A549 (cell line): ENCODE measurements at regions of chr12 and their contacts with region 1.

Region 1: DNA sequence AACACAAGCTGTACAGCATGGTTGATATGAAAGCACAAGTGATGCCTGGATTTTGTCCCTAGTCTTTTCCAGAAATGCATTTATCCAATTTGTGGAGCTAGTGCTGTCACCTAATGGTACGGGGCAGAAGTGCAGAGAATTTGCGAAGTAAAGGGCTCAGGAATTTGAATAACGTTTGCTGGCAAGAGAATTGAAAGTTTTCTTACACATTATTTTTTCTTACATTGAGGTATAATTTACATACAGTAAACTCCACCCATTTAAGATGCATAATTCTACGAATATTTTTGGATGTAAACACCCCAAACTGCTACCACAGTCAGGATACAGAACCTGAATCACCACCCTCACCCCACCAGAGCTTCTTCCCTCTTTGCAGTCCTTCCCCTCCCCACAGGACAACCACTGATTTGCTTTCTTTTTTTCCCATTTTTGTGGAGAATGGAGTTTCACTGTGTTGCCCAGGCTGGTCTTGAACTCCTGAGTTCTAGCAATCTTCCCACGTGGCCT is 3.5 kb downstream of the AICDA start:
- DNase-seq: peak; percentile 47 to 60
- ATAC-seq: peak; percentile 77 to 86; a peak in 5 of 6 replicates
- H3K4me3 ChIP-seq: no peak overlapping the region
- H3K27ac ChIP-seq: peak overlapping the region; percentile 52 to 67; a peak in 5 of 6 replicates
- H3K4me1 ChIP-seq: peaks cover 6% of the 10 kb centered on the region; the same call in 1 of the 3 replicates
- CTCF ChIP-seq: peak; percentile 28; the same call in 2 of the 3 replicates
- EP300 ChIP-seq: no peak
- POLR2A ChIP-seq: no peak
- RAD21 ChIP-seq: peak; percentile 63 to 77

Region 2: DNA sequence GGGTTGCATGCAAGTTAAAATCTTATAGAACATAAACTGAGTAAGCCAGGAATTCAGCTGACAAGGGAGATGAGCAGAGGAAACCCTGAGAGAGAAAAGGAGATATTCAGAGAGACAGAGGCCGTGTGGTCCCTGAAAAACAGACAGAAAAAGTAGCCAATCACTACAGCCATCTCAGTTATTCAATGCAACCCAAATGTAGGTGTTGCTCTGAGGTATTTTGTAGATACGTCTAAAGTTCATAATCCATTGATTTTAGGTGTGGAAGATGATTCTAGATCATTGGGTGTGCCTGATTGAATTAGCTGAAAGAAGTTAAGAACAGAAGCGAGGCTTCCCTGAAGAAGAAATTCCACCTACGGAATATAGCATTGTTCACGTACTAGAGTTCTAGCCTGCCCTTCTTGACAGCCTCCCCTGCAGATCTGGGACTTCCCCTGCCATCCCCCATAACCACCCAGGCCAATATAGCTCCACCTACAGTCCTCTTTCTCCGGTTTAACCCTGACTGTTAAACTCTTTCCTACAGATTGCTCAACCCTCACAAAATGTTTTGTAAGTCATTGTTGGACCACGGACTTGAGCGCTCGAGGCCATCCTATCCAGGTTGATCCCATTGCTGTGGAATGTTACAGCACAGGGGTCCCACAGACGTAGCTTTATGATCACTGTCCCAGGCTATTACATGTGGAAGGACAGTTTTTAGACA is 18.1 kb before region 1 on chr12:
- CTCF ChIA-PET with region 1: interaction called, 15 read pairs
- POLR2A ChIA-PET with region 1: no interaction called
- DNase-seq: no peak
- ATAC-seq: peak; percentile 36 to 43; a peak in 2 of 6 replicates
- H3K4me3 ChIP-seq: no peak overlapping the region
- H3K27ac ChIP-seq: no peak overlapping the region
- H3K4me1 ChIP-seq: peaks cover 3% of the 10 kb centered on the region; the same call in 1 of the 3 replicates
- CTCF ChIP-seq: no peak
- EP300 ChIP-seq: no peak
- POLR2A ChIP-seq: no peak
- RAD21 ChIP-seq: no peak

Region 3: GRCh38 chr12:8622646-8623045 is 13.5 kb after region 1 on chr12:
- CTCF ChIA-PET with region 1: interaction called, 10 read pairs
- POLR2A ChIA-PET with region 1: no interaction called
- DNase-seq: no peak
- ATAC-seq: no peak
- H3K4me3 ChIP-seq: no peak overlapping the region
- H3K27ac ChIP-seq: peak overlapping the region; percentile 9 to 13; a peak in 1 of 6 replicates
- H3K4me1 ChIP-seq: peaks cover 23% of the 10 kb centered on the region
- CTCF ChIP-seq: no peak
- EP300 ChIP-seq: no peak
- POLR2A ChIP-seq: no peak
- RAD21 ChIP-seq: no peak

Region 4: DNA sequence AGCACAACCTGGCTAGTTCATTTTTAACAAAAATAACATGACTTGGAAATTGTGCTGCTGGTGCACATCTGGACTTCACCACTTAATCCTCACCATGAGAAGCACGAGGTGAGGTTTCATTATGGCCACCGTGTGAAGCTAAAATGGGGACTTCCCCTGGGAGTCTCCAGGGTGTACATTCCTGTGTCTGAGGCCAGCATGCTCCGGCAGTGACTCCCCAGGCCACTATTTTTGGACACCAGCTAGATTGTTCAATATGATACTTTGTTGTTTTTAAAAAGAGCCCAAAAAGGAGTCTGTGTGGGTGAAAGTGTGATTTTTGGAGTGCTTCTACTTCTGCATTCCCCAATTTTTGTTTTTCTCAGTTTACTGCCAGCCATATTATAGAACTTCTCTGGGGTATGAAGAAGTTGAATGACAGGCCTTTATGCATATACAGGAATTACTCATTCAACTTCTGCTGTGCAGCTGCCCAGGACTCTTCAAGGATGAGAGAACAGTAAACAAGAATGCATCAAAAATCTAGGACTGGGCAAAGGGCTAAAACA is 20.4 kb after region 1 on chr12:
- CTCF ChIA-PET with region 1: interaction called, 10 read pairs
- POLR2A ChIA-PET with region 1: no interaction called
- DNase-seq: peak in 1 of 2 experiments; percentile 18
- ATAC-seq: peak in 1 of 2 experiments; percentile 42; a peak in 1 of 6 replicates
- H3K4me3 ChIP-seq: no peak overlapping the region
- H3K27ac ChIP-seq: peak overlapping the region; percentile 35 to 61; a peak in 2 of 6 replicates
- H3K4me1 ChIP-seq: peaks cover 15% of the 10 kb centered on the region
- CTCF ChIP-seq: no peak
- EP300 ChIP-seq: no peak
- POLR2A ChIP-seq: no peak
- RAD21 ChIP-seq: no peak